ENCODE measurements at regions of chr1 and their contacts with region 1.

Region 1: DNA sequence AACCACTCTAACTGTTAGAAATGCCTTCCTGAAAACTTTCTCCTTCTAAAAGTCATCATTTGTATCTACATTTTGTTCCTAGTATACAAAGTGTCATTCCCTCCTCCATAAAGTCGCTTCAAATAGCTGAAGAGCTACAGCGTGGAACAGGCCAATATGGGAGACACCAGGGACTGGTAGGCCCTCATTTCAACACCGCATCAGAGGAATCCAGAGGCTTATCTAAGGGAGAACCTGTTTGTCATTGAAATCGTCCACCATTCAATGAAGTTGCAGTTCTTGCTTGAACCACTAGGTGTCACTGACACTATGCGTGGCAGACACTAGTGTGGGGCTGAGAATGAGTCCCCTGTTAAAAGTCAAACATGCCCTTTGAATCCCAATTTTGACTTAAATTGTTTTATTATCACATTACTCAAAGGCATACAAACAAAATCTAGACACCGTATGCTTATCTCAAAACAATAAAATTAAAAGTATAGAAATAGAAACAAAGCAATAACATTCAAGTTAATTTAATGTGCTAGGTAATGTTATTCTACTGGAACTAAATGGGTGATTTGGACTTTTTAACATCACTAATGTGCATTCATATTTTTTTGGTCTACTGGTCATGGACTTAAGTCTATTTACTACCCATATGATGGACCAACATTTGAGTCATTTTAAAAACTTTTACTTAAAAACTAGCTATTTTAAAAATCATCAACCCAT is 182.3 kb downstream of the FCRL5 start:
- DNase-seq: peak; percentile 30
- ATAC-seq: peak; percentile 93
- H3K4me3 ChIP-seq: no peak overlapping the region
- H3K27ac ChIP-seq: no peak overlapping the region
- H3K4me1 ChIP-seq: no peaks in the 10 kb centered on the region
- H3K27me3 ChIP-seq: no peaks in the 10 kb centered on the region
- CTCF ChIP-seq: peak; percentile 68 to 87 (median 83)
- EP300 ChIP-seq: no peak
- POLR2A ChIP-seq: no peak
- RAD21 ChIP-seq: peak; percentile 74

Region 2: DNA sequence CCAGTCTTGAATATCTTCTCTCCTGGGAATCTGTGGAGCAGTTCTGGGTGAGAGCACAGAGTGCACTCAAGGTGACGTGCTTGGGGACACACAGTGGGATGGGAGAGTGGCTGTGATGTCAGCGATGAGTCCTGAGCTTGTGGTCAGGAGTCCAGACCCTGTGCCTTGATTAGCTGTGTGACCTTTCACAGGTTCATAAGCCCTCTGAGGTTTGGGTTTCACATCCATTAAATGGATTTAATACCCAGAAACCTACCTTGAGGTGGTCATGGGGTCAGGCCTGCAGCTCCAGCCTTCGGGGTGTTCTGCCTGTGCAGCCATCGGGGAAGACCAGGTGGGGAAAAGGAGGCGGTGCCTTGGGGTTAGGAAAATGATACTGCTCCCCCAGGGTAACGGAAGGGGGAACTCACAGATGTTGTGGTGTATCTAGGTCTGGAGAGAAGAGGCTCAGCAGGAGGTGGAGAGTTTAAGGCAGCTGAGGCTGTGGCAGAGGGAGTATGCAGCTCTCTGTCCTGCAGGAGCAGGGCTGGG is 193.3 kb before region 1 on chr1:
- CTCF ChIA-PET with region 1: interaction called, 10 read pairs
- POLR2A ChIA-PET with region 1: no interaction called
- RAD21 ChIA-PET with region 1: interaction called, 4 read pairs
- SMC1A ChIA-PET with region 1: interaction called, 4 read pairs
- in situ Hi-C with region 1: no loop called
- intact Hi-C with region 1: no loop called
- DNase-seq: peak; percentile 71
- ATAC-seq: peak; percentile 67
- H3K4me3 ChIP-seq: no peak overlapping the region
- H3K27ac ChIP-seq: peak overlapping the region; percentile 51
- H3K4me1 ChIP-seq: peaks cover 62% of the 10 kb centered on the region
- H3K27me3 ChIP-seq: no peaks in the 10 kb centered on the region
- CTCF ChIP-seq: no peak
- EP300 ChIP-seq: peak; percentile 14 to 43; a peak in 2 of 4 replicates
- POLR2A ChIP-seq: no peak
- RAD21 ChIP-seq: no peak

Region 3: DNA sequence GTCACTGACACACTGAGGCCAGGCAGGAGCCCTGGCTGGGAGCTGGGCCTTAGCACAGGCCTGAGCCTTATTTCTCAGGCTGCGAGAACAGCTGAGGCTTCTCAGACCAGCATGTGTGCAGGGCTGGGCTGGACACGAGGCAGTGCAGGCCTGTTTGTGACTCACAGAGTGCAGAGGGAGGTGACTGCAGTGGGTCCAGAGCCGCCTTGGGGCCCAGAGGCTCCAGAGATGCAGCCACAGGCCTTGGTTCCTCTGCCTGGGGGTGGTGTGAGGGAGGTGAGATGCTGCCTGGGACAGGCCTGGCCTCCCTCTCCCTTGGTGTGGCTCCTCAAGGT is 170.6 kb before region 1 on chr1:
- CTCF ChIA-PET with region 1: interaction called, 44 read pairs
- POLR2A ChIA-PET with region 1: no interaction called
- RAD21 ChIA-PET with region 1: interaction called, 23 read pairs
- SMC1A ChIA-PET with region 1: interaction called, 13 read pairs
- in situ Hi-C with region 1: loop called (anchors 5 kb)
- intact Hi-C with region 1: loop called (anchors 5 kb)
- DNase-seq: no peak
- ATAC-seq: no peak; the same call in 1 of the 3 replicates
- H3K4me3 ChIP-seq: no peak overlapping the region
- H3K27ac ChIP-seq: no peak overlapping the region
- H3K4me1 ChIP-seq: no peaks in the 10 kb centered on the region
- H3K27me3 ChIP-seq: no peaks in the 10 kb centered on the region
- CTCF ChIP-seq: no peak
- EP300 ChIP-seq: no peak
- POLR2A ChIP-seq: no peak
- RAD21 ChIP-seq: no peak

Region 4: DNA sequence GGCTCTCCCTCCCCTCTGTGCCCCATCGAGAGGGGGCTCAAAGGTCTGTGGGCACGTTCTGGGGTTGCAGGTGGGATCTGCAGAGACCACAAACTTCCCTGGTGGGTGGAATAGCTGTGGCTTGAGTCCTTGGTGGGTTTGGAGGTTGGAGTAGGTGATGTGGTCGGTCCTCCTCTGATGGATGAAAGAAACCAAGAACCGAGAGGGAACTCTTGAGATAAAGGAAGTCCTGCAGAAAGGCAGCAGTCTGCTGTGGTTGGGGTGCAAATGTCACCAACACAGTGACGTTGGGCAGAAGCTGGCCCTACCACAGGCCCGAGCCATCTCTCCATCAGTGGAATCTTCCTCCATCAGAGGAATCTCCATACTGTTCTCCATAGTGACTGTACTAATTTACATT is 10.6 kb after region 1 on chr1:
- CTCF ChIA-PET with region 1: interaction called, 25 read pairs
- POLR2A ChIA-PET with region 1: no interaction called
- RAD21 ChIA-PET with region 1: interaction called, 5 read pairs
- SMC1A ChIA-PET with region 1: interaction called, 11 read pairs
- in situ Hi-C with region 1: no loop called
- intact Hi-C with region 1: no loop called
- DNase-seq: no peak
- ATAC-seq: peak; percentile 45
- H3K4me3 ChIP-seq: no peak overlapping the region
- H3K27ac ChIP-seq: no peak overlapping the region
- H3K4me1 ChIP-seq: no peaks in the 10 kb centered on the region
- H3K27me3 ChIP-seq: no peaks in the 10 kb centered on the region; a peak in 1 of 4 replicates
- CTCF ChIP-seq: no peak
- EP300 ChIP-seq: no peak
- POLR2A ChIP-seq: no peak
- RAD21 ChIP-seq: no peak

Region 5: DNA sequence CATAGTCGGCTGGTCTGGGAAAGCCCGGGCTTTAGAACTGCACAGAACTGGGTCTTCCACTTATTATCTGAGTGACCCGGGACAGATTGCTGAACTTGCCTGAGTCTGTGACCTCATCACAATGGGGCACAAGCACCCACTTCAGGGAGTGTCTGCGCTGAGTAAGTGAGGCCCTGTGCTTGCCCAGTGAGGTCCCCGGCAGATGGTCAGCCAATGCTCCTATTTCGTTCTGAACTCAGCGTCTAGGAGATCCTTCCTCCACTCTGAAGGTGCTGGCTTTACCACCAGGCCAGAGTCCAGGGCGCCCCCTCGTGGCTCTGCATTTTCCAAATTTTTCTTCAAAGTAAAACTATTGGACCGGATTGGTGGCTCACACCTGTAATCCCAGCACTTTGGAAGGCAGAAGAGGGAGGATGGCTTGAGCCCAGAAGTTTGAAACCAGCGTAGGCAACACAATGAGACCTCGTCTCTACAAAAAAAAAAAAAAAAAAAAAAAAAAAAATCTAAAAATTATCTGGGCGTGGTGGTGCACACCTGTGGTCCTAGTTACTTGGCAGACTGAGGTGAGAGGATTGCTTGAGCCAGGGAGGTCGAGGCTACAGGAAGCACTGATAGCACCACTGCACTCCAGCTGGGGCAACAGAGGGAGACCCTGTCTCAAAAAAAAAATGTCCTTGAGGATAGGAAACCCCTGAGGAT is 120.7 kb after region 1 on chr1:
- CTCF ChIA-PET with region 1: interaction called, 94 read pairs
- POLR2A ChIA-PET with region 1: no interaction called
- RAD21 ChIA-PET with region 1: interaction called, 12 read pairs
- SMC1A ChIA-PET with region 1: interaction called, 38 read pairs
- in situ Hi-C with region 1: loop called (anchors 5 kb)
- intact Hi-C with region 1: no loop called
- DNase-seq: no peak
- ATAC-seq: peak; percentile 77
- H3K4me3 ChIP-seq: no peak overlapping the region
- H3K27ac ChIP-seq: no peak overlapping the region
- H3K4me1 ChIP-seq: no peaks in the 10 kb centered on the region
- H3K27me3 ChIP-seq: 0 out of 4 replicates have a peak, but pooled peaks cover 0 to 2% of the 10 kb centered on the region in 2 experiments
- CTCF ChIP-seq: peak; percentile 67 to 73 (median 70)
- EP300 ChIP-seq: no peak
- POLR2A ChIP-seq: no peak
- RAD21 ChIP-seq: peak; percentile 67

Region 6: DNA sequence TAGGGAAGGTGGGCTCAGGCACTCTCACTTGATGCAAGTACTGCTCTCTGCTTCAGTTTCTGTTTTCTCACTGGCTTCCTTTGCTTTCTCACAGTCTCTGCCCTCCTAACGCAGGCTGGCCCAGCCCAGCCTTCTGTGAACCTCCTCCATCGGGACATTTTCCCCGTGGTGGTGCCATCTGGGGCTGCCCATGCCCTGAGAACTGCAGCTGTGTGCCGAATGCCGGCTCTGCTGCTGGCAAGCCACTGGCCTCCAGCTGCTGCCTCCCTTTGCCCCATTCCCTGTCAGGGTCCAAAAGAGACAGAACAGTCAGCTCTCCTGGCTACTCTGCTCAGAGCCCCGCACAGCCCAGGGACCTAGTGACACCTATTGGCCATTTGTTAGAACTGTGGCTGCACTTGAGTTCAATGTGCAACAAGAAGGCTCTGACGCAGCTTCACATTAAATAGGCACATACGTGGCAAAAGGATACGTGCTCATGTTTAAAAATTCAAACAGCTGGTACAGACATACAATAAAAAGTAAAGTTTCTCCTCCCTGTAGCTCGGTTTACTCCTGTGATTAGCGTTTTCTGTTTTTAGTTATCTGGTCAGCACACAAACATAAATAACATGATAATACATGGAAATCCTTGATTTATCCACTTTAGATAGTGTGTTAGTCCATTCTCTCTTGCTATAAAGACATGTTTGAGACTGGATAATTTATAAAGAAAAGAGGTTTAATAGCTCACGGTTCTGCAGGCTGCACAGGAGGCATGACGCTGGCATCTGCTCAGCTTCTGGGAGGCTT is 135.7 kb after region 1 on chr1:
- CTCF ChIA-PET with region 1: interaction called, 30 read pairs
- POLR2A ChIA-PET with region 1: no interaction called
- RAD21 ChIA-PET with region 1: interaction called, 15 read pairs
- SMC1A ChIA-PET with region 1: interaction called, 14 read pairs
- in situ Hi-C with region 1: no loop called
- intact Hi-C with region 1: no loop called
- DNase-seq: peak; percentile 59
- ATAC-seq: peak; percentile 99
- H3K4me3 ChIP-seq: 0 out of 2 replicates have a peak overlapping the region, but pooled peaks have one; percentile 26
- H3K27ac ChIP-seq: peak overlapping the region; percentile 48
- H3K4me1 ChIP-seq: peaks cover 31% of the 10 kb centered on the region
- H3K27me3 ChIP-seq: no peaks in the 10 kb centered on the region
- CTCF ChIP-seq: peak; percentile 86 to 91 (median 86)
- EP300 ChIP-seq: no peak
- POLR2A ChIP-seq: no peak
- RAD21 ChIP-seq: peak; percentile 90

Region 7: DNA sequence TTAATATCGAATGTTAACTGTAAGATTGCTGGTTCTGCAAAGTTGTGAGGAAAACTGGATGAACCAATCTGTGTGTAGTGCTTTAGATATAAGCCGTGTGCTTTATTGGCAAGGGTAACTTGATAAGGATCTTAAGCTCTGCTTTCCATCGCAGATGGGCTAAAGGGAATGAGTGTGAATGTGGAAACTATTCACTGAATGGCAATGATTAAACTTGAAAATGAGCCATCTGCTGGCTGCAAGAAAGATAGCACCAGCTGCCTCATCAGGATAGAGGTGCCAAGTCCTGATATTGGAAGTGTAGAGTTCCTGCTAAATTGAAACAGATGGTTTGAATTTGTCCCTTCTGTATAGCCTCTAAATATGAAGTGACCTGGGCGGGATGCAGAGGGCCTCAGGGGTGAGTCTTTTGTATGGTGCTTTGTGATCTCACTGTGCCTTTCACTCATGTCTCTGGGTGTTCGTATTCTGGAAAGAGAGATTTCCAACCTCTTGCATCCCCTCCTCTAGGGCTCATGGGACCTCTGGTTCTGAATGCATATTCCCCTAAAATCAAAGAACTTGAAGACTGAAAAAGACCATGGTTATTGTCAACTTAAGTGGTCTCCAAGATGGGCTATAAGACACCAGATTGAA is 321.4 kb after region 1 on chr1:
- CTCF ChIA-PET with region 1: interaction called, 8 read pairs
- POLR2A ChIA-PET with region 1: no interaction called
- RAD21 ChIA-PET with region 1: interaction called, 4 read pairs
- SMC1A ChIA-PET with region 1: interaction called, 3 read pairs
- in situ Hi-C with region 1: no loop called
- intact Hi-C with region 1: loop called (anchors 5 kb)
- DNase-seq: no peak
- ATAC-seq: peak; percentile 73
- H3K4me3 ChIP-seq: no peak overlapping the region
- H3K27ac ChIP-seq: no peak overlapping the region
- H3K4me1 ChIP-seq: no peaks in the 10 kb centered on the region
- H3K27me3 ChIP-seq: peaks cover 0 to 2% of the 10 kb centered on the region in 2 experiments; a peak in 1 of 4 replicates
- CTCF ChIP-seq: peak; percentile 58 to 73 (median 67)
- EP300 ChIP-seq: no peak
- POLR2A ChIP-seq: no peak
- RAD21 ChIP-seq: peak; percentile 59